ENCODE measurements at regions of chr21 and their contacts with region 1.

Region 1: DNA sequence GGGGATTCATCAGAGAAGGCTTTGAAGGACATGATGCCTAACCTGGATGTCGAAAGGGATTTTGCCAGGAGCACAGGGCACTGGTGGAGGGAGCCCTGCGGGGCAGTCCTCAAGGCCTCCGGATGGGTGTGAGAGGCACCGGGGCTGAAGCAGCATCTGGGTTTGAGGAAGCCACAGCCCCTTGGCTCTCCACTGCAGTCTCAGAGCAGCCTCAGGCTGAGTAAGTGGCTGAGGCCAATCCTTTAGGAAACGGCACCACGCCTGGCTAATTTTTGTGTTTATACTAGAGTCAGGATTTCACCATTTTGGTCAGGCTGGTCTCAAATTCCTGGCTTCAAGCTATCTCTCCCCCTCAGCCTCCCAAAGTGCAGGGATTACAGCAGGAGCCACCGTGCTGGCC is 12.0 kb downstream of the ERVH48-1 start:
- DNase-seq: no peak
- H3K4me3 ChIP-seq: no peak overlapping the region
- H3K27ac ChIP-seq: no peak overlapping the region
- H3K4me1 ChIP-seq: no peaks in the 10 kb centered on the region
- H3K27me3 ChIP-seq: no peaks in the 10 kb centered on the region
- CTCF ChIP-seq: no peak
- EP300 ChIP-seq: no peak
- POLR2A ChIP-seq: no peak

Region 2: GRCh38 chr21:42593007-42593806 is 320.3 kb before region 1 on chr21:
- intact Hi-C with region 1: no loop called
- DNase-seq: peak; percentile 87
- H3K4me3 ChIP-seq: peak overlapping the region in 1 of 4 donors; percentile 5
- H3K27ac ChIP-seq: no peak overlapping the region
- H3K4me1 ChIP-seq: peaks cover 0 to 9% (median 9%) of the 10 kb centered on the region in 4 donors
- H3K27me3 ChIP-seq: peaks cover 0 to 6% (median 0%) of the 10 kb centered on the region in 3 donors
- CTCF ChIP-seq: peak; percentile 51 to 89 (median 56)
- EP300 ChIP-seq: no peak
- POLR2A ChIP-seq: no peak

Region 3: DNA sequence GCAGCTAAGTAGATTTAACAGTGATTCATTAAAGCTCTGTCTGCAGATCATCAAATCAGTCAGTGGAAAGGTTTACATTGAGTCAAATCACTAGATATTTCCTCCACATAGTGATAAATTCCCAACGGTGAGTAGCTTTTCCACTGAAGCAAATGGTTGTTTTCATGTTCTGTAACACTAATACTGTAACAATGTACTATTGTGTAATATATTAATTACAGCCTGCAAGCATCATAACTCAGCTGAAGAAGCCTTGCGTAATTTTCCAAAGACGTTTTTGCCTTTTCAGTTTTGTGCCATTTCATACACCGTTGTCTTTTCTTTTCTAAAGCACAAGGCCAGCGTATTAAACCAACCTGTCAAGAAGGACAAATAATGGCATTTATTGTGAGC is 276.9 kb before region 1 on chr21:
- intact Hi-C with region 1: no loop called
- DNase-seq: no peak
- H3K4me3 ChIP-seq: no peak overlapping the region
- H3K27ac ChIP-seq: peak overlapping the region in 3 of 4 donors; percentile 18 to 66 (median 40)
- H3K4me1 ChIP-seq: peaks cover 0 to 28% (median 25%) of the 10 kb centered on the region in 4 donors
- H3K27me3 ChIP-seq: no peaks in the 10 kb centered on the region
- CTCF ChIP-seq: no peak
- EP300 ChIP-seq: peak in 1 of 4 donors; percentile 58
- POLR2A ChIP-seq: no peak

Region 4: DNA sequence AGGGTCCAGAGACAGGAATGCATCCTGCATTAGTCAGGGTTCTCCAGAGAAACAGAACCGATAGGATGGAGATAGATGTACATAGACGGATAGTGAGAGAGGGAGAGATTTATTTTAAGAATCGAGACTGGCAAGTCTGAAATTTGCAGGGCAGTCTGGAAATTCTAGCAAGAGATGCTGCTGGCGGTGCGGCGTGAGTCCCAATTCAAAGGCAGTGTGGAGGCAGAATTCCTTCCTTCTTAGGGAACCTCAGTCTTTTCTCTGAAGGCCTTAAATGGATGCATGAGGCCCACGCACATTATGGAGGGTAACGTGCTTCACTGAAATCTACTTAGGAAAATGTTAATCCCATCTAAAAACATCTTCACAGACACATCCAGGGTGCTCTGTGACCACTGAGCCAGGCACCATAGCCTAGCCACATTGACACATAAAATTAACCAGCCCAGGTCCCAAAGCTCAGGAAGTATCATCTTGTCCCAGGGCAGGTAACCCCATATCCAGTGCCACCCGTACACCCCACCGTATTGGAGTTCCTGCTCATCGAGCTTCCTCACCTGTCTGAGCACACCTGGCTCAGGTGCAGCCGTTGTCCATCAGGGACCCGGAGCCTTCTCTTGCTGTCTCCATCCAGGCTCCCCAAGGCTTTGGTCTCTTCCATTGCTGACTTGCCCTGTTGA is 51.2 kb after region 1 on chr21:
- intact Hi-C with region 1: loop called (anchors 10 kb)
- DNase-seq: peak; percentile 28
- H3K4me3 ChIP-seq: no peak overlapping the region
- H3K27ac ChIP-seq: no peak overlapping the region
- H3K4me1 ChIP-seq: no peaks in the 10 kb centered on the region
- H3K27me3 ChIP-seq: no peaks in the 10 kb centered on the region
- CTCF ChIP-seq: no peak
- EP300 ChIP-seq: no peak
- POLR2A ChIP-seq: no peak

Region 5: DNA sequence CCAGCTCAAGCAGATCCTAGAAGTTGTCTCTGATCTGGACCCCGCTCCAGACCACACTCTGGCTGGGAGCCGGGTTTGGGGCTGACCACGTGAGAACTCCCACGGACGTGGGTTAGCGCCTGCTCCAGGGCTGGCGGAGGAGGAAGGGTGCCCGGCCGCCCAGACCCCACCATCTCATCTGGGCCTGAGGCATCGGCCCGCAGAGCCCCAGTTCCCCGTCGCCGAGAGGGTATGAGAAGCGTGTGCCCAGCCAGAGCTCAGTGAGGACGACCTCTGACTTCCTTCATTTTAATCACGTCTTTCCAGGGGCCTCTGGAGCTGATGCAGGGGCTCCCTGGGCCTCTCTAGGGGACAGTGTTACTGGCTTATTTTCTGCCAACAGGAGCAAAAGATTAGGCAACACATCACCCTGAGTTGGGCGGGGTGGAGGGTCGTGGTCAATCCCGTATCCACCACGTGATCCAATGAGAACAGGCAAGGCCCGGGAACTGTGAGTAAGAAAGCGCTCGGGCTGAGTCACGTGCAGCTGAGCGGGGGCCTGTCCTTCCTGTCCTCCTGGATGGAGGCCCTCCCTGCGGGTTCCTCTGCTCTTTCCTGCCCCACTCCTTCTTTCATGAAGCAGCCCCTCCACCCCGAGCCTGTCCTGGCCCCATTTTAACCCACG is 432.4 kb after region 1 on chr21:
- intact Hi-C with region 1: no loop called
- DNase-seq: no peak
- H3K4me3 ChIP-seq: no peak overlapping the region
- H3K27ac ChIP-seq: no peak overlapping the region
- H3K4me1 ChIP-seq: peaks cover 0 to 5% (median 0%) of the 10 kb centered on the region in 4 donors
- H3K27me3 ChIP-seq: no peaks in the 10 kb centered on the region
- CTCF ChIP-seq: no peak
- EP300 ChIP-seq: no peak
- POLR2A ChIP-seq: no peak

Measured in sigmoid colon (tissue), 7 donors.